ENCODE measurements at regions of chr1 and their contacts with region 1.

Region 1: GRCh38 chr1:25204797-25205480 is 27.4 kb downstream of the SYF2 start:
- DNase-seq: no peak
- H3K4me3 ChIP-seq: no peak overlapping the region
- H3K27ac ChIP-seq: no peak overlapping the region
- H3K27me3 ChIP-seq: peaks cover 0 to 4% (median 0%) of the 10 kb centered on the region in 45 donors
- CTCF ChIP-seq: peak; percentile 75 to 97 (median 88)

Region 2: DNA sequence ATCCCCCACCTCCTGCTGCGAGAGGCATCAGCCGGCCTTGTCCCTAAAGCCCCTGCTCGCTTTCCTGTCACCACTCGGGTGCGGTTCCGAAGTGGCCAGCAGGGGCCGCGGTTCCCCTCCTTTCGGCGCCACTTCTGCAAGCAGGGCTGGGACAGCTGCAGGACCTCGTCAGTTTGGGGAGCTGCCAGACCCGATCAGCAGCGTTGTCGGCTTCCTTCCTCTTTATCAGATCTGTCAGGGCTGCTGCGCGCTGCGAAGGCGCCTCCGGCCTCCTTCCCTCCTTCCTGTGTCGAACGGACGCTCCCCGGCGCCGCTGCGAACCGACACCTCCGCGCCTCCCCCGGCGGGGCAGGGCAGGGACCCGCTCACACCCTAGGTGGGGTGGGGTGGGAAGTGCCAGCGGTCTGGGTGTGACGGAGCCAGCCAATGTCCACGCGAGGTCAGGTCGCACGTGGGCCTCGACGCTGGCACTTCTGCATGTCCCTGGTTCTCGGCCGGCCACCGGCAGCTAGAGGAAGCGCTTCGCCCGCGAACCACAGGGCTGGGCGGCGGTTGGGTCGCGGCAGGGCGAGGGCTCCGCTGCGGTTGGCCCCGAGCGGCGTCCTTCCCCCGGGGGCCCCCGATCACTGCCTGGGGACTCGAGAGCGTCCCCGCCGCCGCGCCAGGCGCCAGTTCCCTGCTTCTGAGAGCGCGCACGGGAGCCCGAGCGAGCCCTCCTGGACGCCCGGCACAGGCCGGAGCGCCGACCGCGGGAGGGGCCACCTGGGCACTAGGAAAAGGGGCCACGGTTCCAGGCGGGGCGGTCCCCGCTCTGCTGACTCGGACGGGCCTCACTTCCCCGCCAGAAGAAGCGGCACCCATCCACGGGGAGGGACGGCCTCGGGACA is 356.7 kb before region 1 on chr1:
- intact Hi-C with region 1: loop called (anchors 1 to 2 kb)
- DNase-seq: peak; percentile 62 to 94 (median 92)
- H3K4me3 ChIP-seq: peak overlapping the region; percentile 44 to 80 (median 63)
- H3K27ac ChIP-seq: peak overlapping the region in 45 of 59 donors; percentile 1 to 86 (median 65)
- H3K27me3 ChIP-seq: no peaks in the 10 kb centered on the region
- CTCF ChIP-seq: peak; percentile 73 to 99 (median 96)

Region 3: GRCh38 chr1:24930204-24931145 is 274.5 kb before region 1 on chr1 and contains the start of gene RUNX3:
- intact Hi-C with region 1: loop called in 1 of 2 experiments (anchors 5 kb)
- DNase-seq: no peak
- H3K4me3 ChIP-seq: peak within 1 kb of the TSS in 56 of 59 donors; percentile 4 to 56 (median 34)
- H3K27ac ChIP-seq: peak within 1 kb of the TSS in 13 of 59 donors; percentile 5 to 69 (median 36)
- H3K27me3 ChIP-seq: peaks cover 8 to 98% (median 87%) of the 10 kb centered on the region in 45 donors
- CTCF ChIP-seq: peak in 5 of 56 donors; percentile 8 to 38 (median 24)
- total RNA-seq, gene RUNX3: 0.29 to 3.9 (median 0.96) TPM

Region 4: DNA sequence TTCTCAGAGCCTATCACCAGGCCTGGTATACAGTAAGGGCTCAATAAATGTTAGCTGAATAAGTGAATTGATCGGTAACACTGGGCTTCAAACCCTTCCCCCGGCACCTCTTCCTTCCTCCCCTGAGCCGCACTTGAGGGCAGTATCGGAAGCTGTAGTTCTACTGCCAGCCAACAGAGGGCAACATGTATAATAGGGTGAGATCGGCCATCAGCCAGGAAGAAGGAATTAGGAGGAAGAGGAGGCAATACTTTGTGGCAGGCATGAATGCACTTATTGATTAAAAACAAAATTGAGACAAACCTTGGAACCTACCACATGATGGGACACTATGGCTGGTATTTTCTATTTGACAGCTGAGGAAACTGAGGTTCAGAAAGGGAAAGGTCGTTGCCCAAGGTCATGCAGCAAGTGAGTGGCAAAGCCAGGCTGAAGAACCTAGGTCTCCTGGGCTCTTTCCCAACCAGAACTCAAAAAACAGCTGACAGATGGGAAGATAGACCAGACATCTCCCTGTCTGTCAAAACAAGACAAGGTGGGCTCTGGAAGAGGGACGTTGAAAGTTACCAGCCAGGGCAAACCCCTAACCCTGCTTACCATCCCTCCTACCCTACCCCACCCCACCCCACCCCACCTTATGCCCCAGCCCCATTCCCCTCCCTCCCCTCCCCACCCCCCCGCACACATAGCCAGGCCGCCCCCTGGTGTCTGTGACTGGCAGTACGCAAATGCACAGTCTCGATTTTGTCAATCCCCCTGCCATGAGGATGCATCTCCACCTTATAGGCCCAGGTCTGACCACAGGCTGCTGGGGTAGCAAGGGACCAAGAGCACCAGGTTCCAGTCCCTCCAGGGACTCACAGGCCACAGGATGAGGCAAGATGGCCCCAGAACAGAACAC is 167.5 kb before region 1 on chr1:
- intact Hi-C with region 1: loop called in 1 of 2 experiments (anchors 10 kb)
- DNase-seq: no peak
- H3K4me3 ChIP-seq: no peak overlapping the region
- H3K27ac ChIP-seq: no peak overlapping the region
- H3K27me3 ChIP-seq: peaks cover 0 to 12% (median 0%) of the 10 kb centered on the region in 45 donors
- CTCF ChIP-seq: peak in 43 of 56 donors; percentile 2 to 56 (median 35)